K562 (cell line): ENCODE measurements at regions of chr13 and their contacts with region 1.

Region 1: GRCh38 chr13:24995226-24995804 is 100.6 kb upstream of the PABPC3 start:
- DNase-seq: peak; percentile 37 to 81 (median 52)
- ATAC-seq: peak; percentile 97
- H3K4me3 ChIP-seq: no peak overlapping the region
- H3K27ac ChIP-seq: no peak overlapping the region
- H3K4me1 ChIP-seq: no peaks in the 10 kb centered on the region
- H3K27me3 ChIP-seq: no peaks in the 10 kb centered on the region; a peak in 1 of 5 replicates
- CTCF ChIP-seq: peak; percentile 66 to 74 (median 74)
- EP300 ChIP-seq: no peak
- POLR2A ChIP-seq: no peak
- RAD21 ChIP-seq: peak; percentile 30 to 63

Region 2: GRCh38 chr13:24280720-24281119 is 714.6 kb before region 1 on chr13:
- CTCF ChIA-PET with region 1: no interaction called
- POLR2A ChIA-PET with region 1: no interaction called
- in situ Hi-C with region 1: no loop called
- intact Hi-C with region 1: no loop called
- DNase-seq: no peak
- ATAC-seq: no peak
- H3K4me3 ChIP-seq: no peak overlapping the region
- H3K27ac ChIP-seq: no peak overlapping the region
- H3K4me1 ChIP-seq: no peaks in the 10 kb centered on the region
- H3K27me3 ChIP-seq: no peaks in the 10 kb centered on the region; a peak in 1 of 5 replicates
- CTCF ChIP-seq: no peak
- EP300 ChIP-seq: no peak
- POLR2A ChIP-seq: no peak
- RAD21 ChIP-seq: no peak

Region 3: DNA sequence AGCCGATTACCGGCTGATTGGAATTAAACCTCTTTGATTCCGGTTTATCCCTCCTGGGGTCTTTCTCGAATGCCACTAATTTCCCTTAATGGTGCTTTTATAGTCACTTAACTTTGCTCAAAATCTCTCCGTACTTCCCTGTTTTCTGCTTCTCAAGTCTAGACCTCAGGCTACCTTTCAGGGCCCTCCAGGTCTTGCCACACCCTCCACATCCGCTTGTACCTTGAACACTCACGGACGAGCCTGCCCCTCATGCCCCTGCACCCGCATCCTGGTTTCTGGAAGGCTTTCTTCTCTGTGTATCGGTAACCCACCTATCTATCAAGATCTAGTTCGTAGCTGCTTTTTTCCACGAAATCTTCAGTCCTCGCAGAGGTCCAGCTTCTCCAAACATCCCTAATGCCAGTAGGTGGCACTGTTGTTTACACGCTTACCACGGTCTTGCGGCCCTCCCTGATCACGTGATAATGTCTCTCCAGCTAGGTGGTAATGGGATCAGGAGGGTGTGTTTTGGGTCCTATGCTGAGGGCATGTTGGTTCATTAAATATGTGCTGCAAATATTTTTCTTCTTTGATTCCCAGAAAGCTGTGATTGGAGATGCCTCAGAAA is 301.3 kb before region 1 on chr13:
- CTCF ChIA-PET with region 1: interaction called, 4 read pairs
- POLR2A ChIA-PET with region 1: no interaction called
- in situ Hi-C with region 1: no loop called
- intact Hi-C with region 1: loop called (anchors 5 kb)
- DNase-seq: peak; percentile 64 to 76 (median 73)
- ATAC-seq: peak; percentile 93
- H3K4me3 ChIP-seq: no peak overlapping the region
- H3K27ac ChIP-seq: no peak overlapping the region
- H3K4me1 ChIP-seq: no peaks in the 10 kb centered on the region
- H3K27me3 ChIP-seq: peaks cover 4 to 26% of the 10 kb centered on the region in 2 experiments; a peak in 4 of 5 replicates
- CTCF ChIP-seq: peak; percentile 64 to 71 (median 70)
- EP300 ChIP-seq: no peak
- POLR2A ChIP-seq: no peak
- RAD21 ChIP-seq: peak; percentile 56 to 67

Region 4: GRCh38 chr13:24727731-24728601 is 267.3 kb before region 1 on chr13:
- CTCF ChIA-PET with region 1: interaction called, 3 read pairs
- POLR2A ChIA-PET with region 1: no interaction called
- in situ Hi-C with region 1: loop called (anchors 25 kb)
- intact Hi-C with region 1: no loop called
- DNase-seq: peak; percentile 49 to 75 (median 61)
- ATAC-seq: peak; percentile 99
- H3K4me3 ChIP-seq: no peak overlapping the region
- H3K27ac ChIP-seq: no peak overlapping the region
- H3K4me1 ChIP-seq: no peaks in the 10 kb centered on the region
- H3K27me3 ChIP-seq: peaks cover 0 to 6% of the 10 kb centered on the region in 2 experiments; a peak in 2 of 5 replicates
- CTCF ChIP-seq: peak; percentile 71 to 99 (median 96)
- EP300 ChIP-seq: no peak
- POLR2A ChIP-seq: no peak
- RAD21 ChIP-seq: peak in 1 of 2 experiments; percentile 51; a peak in 3 of 4 replicates

Region 5: DNA sequence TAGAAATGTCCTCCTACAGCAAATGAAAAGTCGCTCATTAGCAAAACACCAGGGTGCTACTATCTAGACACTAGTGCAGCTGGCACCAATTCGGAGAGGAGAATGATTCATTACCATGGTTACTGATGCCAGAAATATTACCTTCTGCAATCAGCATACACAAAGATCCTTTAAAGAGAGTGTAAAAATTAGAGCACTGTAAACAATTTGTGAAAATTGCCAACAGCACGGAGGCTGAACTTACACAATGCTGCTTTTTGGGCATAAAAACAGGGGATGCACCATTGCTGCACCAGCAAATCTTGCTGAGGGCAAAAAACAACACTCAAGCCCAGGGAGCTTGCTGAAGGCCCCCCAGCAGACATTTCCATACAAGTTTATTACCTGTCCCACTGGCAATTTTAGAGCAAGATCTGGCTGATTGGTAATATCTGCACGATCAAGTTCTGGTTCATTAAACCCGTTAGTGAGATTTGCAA is 142.4 kb after region 1 on chr13:
- CTCF ChIA-PET with region 1: no interaction called
- POLR2A ChIA-PET with region 1: no interaction called
- in situ Hi-C with region 1: no loop called
- intact Hi-C with region 1: no loop called
- DNase-seq: no peak
- ATAC-seq: no peak
- H3K4me3 ChIP-seq: no peak overlapping the region
- H3K27ac ChIP-seq: no peak overlapping the region
- H3K4me1 ChIP-seq: no peaks in the 10 kb centered on the region
- H3K27me3 ChIP-seq: peaks cover 2 to 21% of the 10 kb centered on the region in 2 experiments; a peak in 3 of 5 replicates
- CTCF ChIP-seq: no peak
- EP300 ChIP-seq: no peak
- POLR2A ChIP-seq: no peak
- RAD21 ChIP-seq: no peak

Region 6: DNA sequence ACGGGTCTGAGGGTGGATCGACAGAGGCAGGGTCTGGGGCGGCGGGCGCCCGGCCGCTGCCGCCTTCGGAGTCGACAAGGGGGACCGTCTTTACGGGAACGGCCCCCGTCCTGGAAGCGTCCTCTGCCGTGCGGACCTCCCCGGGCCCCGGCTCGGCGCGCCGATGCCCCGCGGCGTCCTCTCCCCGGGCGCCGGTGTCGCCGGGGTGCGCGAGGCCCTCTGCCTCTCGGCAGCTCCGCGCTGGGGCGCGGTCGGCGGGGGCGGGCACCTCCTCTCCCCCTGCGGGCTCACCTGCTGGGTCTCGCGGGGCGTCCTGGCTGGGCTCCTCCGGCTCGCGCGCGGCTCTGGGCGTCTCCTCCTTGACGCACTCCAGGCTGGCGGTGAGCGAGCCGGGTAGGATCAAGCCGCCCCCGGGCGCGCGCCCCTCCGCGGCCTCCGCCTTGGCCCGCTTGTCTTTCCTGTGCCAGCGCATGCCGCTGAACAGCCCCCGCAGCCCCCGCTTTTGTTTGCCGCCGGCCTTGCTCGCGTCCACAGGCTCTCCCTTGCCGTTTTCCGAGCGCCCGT is 175.3 kb after region 1 on chr13:
- CTCF ChIA-PET with region 1: no interaction called
- POLR2A ChIA-PET with region 1: no interaction called
- in situ Hi-C with region 1: no loop called
- intact Hi-C with region 1: no loop called
- DNase-seq: no peak
- ATAC-seq: no peak
- H3K4me3 ChIP-seq: no peak overlapping the region
- H3K27ac ChIP-seq: no peak overlapping the region
- H3K4me1 ChIP-seq: peaks cover 0 to 5% of the 10 kb centered on the region in 2 experiments; a peak in 2 of 5 replicates
- H3K27me3 ChIP-seq: peaks cover 5 to 31% of the 10 kb centered on the region in 2 experiments; a peak in 3 of 5 replicates
- CTCF ChIP-seq: no peak
- EP300 ChIP-seq: no peak
- POLR2A ChIP-seq: no peak
- RAD21 ChIP-seq: no peak

Region 7: DNA sequence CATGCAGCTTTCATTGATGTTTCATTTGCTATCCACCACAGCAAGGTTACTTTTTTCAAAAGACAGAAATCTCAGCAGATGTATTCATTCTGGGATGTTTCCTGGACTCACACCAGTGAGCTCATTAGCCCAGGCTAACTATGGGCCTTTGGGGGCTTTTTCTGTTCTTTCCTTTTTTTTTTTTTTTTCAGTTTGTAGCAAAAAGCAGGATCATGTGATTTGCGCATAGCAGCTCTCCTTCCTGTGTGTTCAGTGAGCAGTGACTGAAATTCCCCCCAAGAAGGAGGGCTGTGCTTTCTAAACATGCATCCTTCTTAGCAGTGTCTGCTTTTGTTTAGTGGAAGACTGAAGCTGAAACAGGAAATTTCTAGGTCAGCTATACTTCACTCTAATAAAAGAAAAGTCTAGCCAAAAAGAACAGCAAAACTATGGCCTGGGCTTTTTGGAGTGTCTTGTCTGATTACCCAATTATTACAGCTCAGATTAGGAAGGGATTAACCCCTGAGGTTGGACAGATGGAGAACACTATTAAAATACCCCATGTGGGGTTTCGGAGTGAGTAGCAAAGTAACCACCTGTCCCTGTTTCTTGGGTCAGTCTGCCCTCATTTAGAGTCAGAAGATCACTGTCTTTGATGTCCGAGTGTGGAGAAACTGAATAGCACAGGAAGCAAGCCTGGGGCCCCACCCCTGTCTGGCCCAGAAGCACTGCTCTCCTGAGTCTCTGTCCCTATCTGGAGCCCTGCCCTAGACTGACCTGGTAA is 185.6 kb after region 1 on chr13:
- CTCF ChIA-PET with region 1: no interaction called
- POLR2A ChIA-PET with region 1: no interaction called
- in situ Hi-C with region 1: no loop called
- intact Hi-C with region 1: no loop called
- DNase-seq: no peak
- ATAC-seq: no peak
- H3K4me3 ChIP-seq: no peak overlapping the region
- H3K27ac ChIP-seq: no peak overlapping the region
- H3K4me1 ChIP-seq: no peaks in the 10 kb centered on the region
- H3K27me3 ChIP-seq: peaks cover 2% of the 10 kb centered on the region in 2 experiments; a peak in 1 of 5 replicates
- CTCF ChIP-seq: no peak
- EP300 ChIP-seq: no peak
- POLR2A ChIP-seq: no peak
- RAD21 ChIP-seq: no peak